PC-9 (cell line): ENCODE measurements at regions of chr4 and their contacts with region 1.

Region 1: DNA sequence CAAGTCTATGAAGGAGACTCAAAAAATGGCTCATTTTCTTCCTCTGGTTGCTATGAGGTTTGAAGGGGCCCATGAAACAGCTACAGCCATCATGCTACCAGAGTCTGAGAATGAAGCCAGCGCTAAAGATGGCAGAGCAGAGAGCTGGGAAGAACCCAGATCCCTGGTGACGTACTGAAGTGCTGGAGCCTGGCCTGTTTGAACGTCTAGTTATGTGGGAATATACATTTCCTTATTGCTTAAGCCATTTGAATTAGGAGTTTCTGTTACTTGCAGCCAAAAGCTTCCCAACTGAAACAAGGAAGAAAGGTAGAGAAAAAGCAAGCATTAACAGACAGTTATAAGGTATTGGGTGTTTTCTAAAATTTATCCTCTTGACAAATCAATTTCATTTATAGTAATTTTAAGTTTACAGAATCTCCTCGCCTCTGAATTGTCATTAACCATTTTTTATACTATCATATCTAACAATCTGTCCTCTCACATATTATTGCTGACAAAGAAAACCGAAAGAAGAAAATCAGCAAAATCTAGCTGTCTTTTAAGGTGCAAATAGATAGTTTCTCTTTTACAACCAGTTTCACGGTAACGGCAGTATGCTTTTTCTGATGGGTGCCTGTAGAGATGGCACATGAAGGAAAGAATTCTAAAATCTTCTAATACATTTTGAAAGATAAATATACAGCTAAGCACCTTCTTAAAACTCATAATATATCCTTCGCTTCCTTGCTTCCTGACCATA is 8.9 kb upstream of the COQ2 start:
- DNase-seq: no peak
- H3K4me3 ChIP-seq: no peak overlapping the region
- H3K27ac ChIP-seq: no peak overlapping the region
- H3K4me1 ChIP-seq: no peaks in the 10 kb centered on the region
- H3K27me3 ChIP-seq: no peaks in the 10 kb centered on the region
- CTCF ChIP-seq: no peak

Region 2: GRCh38 chr4:84569009-84569408 is 1275.5 kb after region 1 on chr4:
- CTCF ChIA-PET with region 1: interaction called, 10 read pairs
- POLR2A ChIA-PET with region 1: no interaction called
- intact Hi-C with region 1: no loop called
- DNase-seq: no peak
- H3K4me3 ChIP-seq: no peak overlapping the region
- H3K27ac ChIP-seq: no peak overlapping the region
- H3K4me1 ChIP-seq: peaks cover 14% of the 10 kb centered on the region
- H3K27me3 ChIP-seq: no peaks in the 10 kb centered on the region
- CTCF ChIP-seq: no peak